Mammary epithelial cell (primary cell): ENCODE measurements at regions of chr1 and their contacts with region 1.

Region 1: GRCh38 chr1:9809100-9809510 is 14.7 kb downstream of the CLSTN1 start:
- DNase-seq: peak; percentile 29
- H3K4me3 ChIP-seq: no peak overlapping the region
- H3K27ac ChIP-seq: peak overlapping the region; percentile 1
- H3K4me1 ChIP-seq: peaks cover 16% of the 10 kb centered on the region
- H3K27me3 ChIP-seq: no peaks in the 10 kb centered on the region
- CTCF ChIP-seq: no peak

Region 2: GRCh38 chr1:9275567-9276034 is 533.5 kb before region 1 on chr1:
- CTCF ChIA-PET with region 1: no interaction called
- dilution Hi-C with region 1: no loop called
- in situ Hi-C with region 1: no loop called
- intact Hi-C with region 1: no loop called
- DNase-seq: peak; percentile 77
- H3K4me3 ChIP-seq: no peak overlapping the region
- H3K27ac ChIP-seq: no peak overlapping the region
- H3K4me1 ChIP-seq: peaks cover 22% of the 10 kb centered on the region
- H3K27me3 ChIP-seq: no peaks in the 10 kb centered on the region
- CTCF ChIP-seq: no peak

Region 3: DNA sequence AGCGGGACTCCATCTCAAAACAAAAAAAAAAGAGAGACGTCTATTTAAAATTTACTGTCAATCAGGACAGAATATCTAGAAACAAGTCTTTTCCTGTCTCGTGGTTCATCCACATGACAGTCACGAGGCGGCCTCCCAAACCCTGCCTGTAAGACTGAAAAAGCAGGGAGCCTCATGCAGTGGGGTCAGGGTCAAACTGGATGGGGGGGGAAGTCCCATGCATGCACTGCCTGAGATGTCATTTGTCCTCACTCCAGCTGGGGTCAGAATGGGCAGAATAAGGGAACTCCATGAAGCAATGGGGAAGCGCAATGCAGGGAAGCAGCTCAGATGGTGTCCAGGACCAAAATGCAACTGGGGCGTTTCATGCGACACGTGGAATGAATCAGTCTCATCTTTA is 72.0 kb before region 1 on chr1:
- CTCF ChIA-PET with region 1: no interaction called
- dilution Hi-C with region 1: loop called (anchors 5 kb)
- in situ Hi-C with region 1: no loop called
- intact Hi-C with region 1: no loop called
- DNase-seq: no peak
- H3K4me3 ChIP-seq: no peak overlapping the region
- H3K27ac ChIP-seq: no peak overlapping the region
- H3K4me1 ChIP-seq: no peaks in the 10 kb centered on the region
- H3K27me3 ChIP-seq: no peaks in the 10 kb centered on the region
- CTCF ChIP-seq: no peak